Activated T-helper 2 cell treated with anti-CD3 and anti-CD28 coated beads, Interferon-gamma antibody, Interleukin-2, Interleukin-4, amounts not matched to agents 10 μg/mL and 5 μg/mL and 100 μg/mL, durations not matched to agents 14 hours and 24 hours and 36 hours (primary cell): ENCODE measurements at regions of chr17 and their contacts with region 1.

Region 1: DNA sequence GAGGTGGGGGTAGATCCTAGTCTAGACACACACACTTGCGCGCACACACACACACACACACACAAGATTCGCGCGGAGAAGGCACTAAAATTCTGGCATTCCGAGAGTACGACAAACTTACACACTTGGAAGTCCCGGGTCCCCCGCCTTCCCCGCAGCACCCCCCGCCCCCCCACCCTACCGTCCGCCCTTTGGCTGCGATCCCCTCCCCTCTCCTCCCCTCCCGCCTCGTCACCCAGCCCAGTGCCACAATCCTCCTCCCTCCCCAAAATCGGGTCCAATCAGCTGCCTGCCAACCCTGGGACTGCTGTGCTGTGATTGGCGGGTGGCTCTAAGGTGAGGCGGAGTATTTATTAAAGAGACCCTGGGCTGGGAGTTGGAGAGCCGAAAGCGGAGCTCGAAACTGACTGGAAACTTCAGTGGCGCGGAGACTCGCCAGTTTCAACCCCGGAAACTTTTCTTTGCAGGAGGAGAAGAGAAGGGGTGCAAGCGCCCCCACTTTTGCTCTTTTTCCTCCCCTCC is at the start of gene SOX9:
- DNase-seq: no peak
- H3K4me3 Mint-ChIP-seq: no peak within 1 kb of the TSS
- H3K27ac Mint-ChIP-seq: no peak within 1 kb of the TSS
- H3K4me1 Mint-ChIP-seq: no peaks in the 10 kb centered on the region
- H3K27me3 Mint-ChIP-seq: peaks cover 68% of the 10 kb centered on the region
- total RNA-seq, gene SOX9: not detected in 2 replicates

Region 2: GRCh38 chr17:71472809-71473789 is 647.6 kb before region 1 on chr17:
- intact Hi-C with region 1: loop called (anchors 10 kb)
- DNase-seq: no peak
- H3K4me3 Mint-ChIP-seq: no peak overlapping the region
- H3K27ac Mint-ChIP-seq: no peak overlapping the region
- H3K4me1 Mint-ChIP-seq: no peaks in the 10 kb centered on the region
- H3K27me3 Mint-ChIP-seq: no peaks in the 10 kb centered on the region

Region 3: GRCh38 chr17:72539981-72540897 is 419.5 kb after region 1 on chr17:
- intact Hi-C with region 1: loop called (anchors 5 kb)
- DNase-seq: peak; percentile 37
- H3K4me3 Mint-ChIP-seq: no peak overlapping the region
- H3K27ac Mint-ChIP-seq: peak overlapping the region; percentile 14
- H3K4me1 Mint-ChIP-seq: peaks cover 2% of the 10 kb centered on the region
- H3K27me3 Mint-ChIP-seq: peaks cover 9% of the 10 kb centered on the region

Region 4: DNA sequence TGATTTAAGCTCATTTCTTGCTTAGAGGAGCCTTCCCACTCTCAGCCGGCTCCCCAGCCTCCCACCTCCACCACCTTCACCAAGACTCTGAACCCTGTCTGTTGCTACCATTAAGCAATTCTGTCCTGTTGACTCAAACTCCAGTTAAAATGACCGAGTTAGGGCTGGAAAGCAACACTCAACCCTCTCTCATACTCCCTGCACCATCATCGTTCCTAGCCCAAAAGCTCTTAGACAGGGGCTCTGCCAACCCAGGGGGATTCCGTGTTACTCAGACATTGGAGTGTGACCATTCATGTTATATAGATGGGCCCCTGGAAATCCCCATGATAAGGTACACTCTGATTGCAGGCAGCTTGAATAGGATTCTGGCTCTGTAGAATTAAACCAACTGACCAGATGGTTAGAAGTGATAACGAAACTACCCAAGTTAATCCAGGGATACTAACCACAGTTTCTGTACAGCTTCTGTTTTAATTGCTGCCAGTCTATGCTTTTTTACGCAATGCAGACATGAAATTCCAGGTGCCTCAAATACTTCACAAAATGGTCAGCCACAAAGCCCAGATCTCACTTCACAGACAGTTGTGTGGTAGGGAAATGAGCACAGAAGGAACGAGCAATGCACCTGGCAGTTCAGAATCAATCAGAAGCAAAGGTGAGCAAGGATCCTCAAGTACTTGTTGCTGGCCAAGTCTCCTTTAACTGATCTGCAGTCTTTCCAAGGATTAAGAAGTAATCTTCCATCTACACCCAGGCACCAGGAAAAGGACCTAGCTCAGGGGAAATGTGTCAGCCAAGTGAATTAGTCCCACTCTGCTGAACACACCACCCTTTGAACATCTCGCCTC is 1046.3 kb after region 1 on chr17:
- intact Hi-C with region 1: loop called (anchors 5 kb)
- DNase-seq: no peak
- H3K4me3 Mint-ChIP-seq: peak overlapping the region; percentile 34
- H3K27ac Mint-ChIP-seq: no peak overlapping the region
- H3K4me1 Mint-ChIP-seq: peaks cover 27% of the 10 kb centered on the region
- H3K27me3 Mint-ChIP-seq: peaks cover 64% of the 10 kb centered on the region